Caco-2 (cell line): ENCODE measurements at regions of chrX and their contacts with region 1.

Region 1: DNA sequence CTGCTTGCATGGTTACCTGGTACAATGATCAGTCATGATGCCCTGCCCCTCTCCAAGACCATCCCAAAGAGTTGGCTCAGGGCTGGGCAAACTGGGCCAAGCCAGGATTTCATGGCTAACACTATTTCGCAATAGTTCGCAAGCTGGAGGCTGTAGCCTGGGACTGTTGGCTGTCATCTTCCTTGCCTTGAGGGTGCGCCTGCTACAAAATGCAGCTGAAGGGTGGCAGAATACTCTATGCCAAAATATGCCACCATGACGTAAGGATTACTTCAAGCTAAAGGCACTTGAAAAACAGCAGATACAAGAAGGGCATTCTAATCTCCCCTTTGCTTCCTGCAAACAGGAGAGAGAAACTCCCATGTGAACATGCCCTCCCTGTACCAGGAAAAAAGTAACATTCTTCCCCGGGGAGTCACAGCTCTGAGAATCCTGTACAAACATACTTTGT is 21.0 kb downstream of the SAT1 start:
- DNase-seq: peak; percentile 47 to 48
- H3K4me3 ChIP-seq: no peak overlapping the region
- H3K4me3 Mint-ChIP-seq: peak overlapping the region; percentile 38
- H3K27ac Mint-ChIP-seq: peak overlapping the region; percentile 90
- H3K4me1 ChIP-seq: peaks cover 27% of the 10 kb centered on the region
- H3K4me1 Mint-ChIP-seq: peaks cover 28% of the 10 kb centered on the region
- H3K27me3 ChIP-seq: no peaks in the 10 kb centered on the region
- H3K27me3 Mint-ChIP-seq: no peaks in the 10 kb centered on the region
- CTCF ChIP-seq: no peak

Region 2: DNA sequence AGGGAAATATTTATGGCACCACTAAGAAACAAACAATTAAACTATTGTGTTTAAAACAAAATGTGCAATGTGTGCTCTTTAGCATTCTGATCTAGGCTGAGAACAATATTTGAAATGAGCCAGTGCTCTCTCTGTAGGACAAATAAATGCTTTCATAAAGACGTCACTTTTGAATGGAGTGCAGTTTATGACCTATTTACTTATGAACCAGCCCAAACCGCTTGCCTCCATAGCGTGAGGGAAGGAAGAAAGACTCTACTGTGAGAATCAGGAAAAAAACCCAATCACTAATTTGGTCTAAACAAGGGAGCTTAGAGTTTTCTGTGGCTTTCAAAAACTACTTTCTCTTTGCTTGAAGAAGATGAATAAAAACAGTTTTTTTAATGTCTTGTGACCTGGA is 18.4 kb after region 1 on chrX:
- CTCF ChIA-PET with region 1: interaction called, 6 read pairs
- POLR2A ChIA-PET with region 1: no interaction called
- intact Hi-C with region 1: loop called (anchors 1 kb)
- DNase-seq: peak in 1 of 2 experiments; percentile 36
- H3K4me3 ChIP-seq: no peak overlapping the region
- H3K4me3 Mint-ChIP-seq: peak overlapping the region; percentile 16
- H3K27ac Mint-ChIP-seq: peak overlapping the region; percentile 75
- H3K4me1 ChIP-seq: peaks cover 16% of the 10 kb centered on the region
- H3K4me1 Mint-ChIP-seq: peaks cover 16% of the 10 kb centered on the region
- H3K27me3 ChIP-seq: no peaks in the 10 kb centered on the region
- H3K27me3 Mint-ChIP-seq: no peaks in the 10 kb centered on the region
- CTCF ChIP-seq: no peak

Region 3: GRCh38 chrX:23844502-23845138 is 40.7 kb after region 1 on chrX:
- CTCF ChIA-PET with region 1: no interaction called
- POLR2A ChIA-PET with region 1: no interaction called
- intact Hi-C with region 1: loop called (anchors 2 kb)
- DNase-seq: peak; percentile 52 to 57
- H3K4me3 ChIP-seq: no peak overlapping the region
- H3K4me3 Mint-ChIP-seq: peak overlapping the region; percentile 66
- H3K27ac Mint-ChIP-seq: peak overlapping the region; percentile 85
- H3K4me1 ChIP-seq: peaks cover 17% of the 10 kb centered on the region
- H3K4me1 Mint-ChIP-seq: peaks cover 6% of the 10 kb centered on the region
- H3K27me3 ChIP-seq: no peaks in the 10 kb centered on the region
- H3K27me3 Mint-ChIP-seq: no peaks in the 10 kb centered on the region
- CTCF ChIP-seq: no peak